ENCODE measurements at regions of chr11 and their contacts with region 1.

Region 1: GRCh38 chr11:59171508-59172322 is at the start of gene DTX4:
- DNase-seq: peak; percentile 90 to 97 (median 96)
- H3K4me3 ChIP-seq: peak within 1 kb of the TSS in 2 of 4 donors; percentile 27 to 67
- H3K27ac ChIP-seq: peak within 1 kb of the TSS in 2 of 5 donors; percentile 79 to 83
- H3K4me1 ChIP-seq: peaks cover 0 to 12% of the 10 kb centered on the region in 2 donors
- H3K27me3 ChIP-seq: no peaks in the 10 kb centered on the region
- CTCF ChIP-seq: peak; percentile 81 to 98 (median 94)
- POLR2A ChIP-seq: peak in 1 of 2 donors; percentile 18
- total RNA-seq, gene DTX4: 2.2 to 7.8 (median 3.3) TPM

Region 2: DNA sequence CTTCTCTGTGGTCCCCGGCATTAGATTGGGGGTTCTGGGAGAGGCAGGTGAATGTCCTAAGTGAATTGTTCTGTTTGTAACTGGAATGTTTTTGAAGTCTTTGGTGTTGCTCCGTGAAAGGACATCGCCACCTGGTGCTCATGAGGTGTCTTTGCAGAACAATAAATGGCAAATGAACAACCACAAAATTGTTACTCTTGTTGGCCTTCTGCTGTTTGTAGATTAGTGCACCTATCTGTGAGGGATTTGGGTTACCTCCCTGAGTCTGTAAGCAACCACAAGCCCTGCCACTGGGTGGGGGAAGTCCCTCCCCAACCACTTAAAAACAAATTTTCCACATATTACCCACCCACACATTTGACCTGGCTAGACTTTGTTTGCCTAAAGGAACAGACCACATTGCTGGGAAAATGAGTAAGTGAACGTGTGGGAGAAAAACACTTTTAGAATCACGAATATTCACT is 36.3 kb after region 1 on chr11:
- intact Hi-C with region 1: loop called (anchors 5 kb)
- DNase-seq: peak in 6 of 7 donors; percentile 37 to 79 (median 58)
- H3K4me3 ChIP-seq: peak overlapping the region in 1 of 4 donors; percentile 3
- H3K27ac ChIP-seq: no peak overlapping the region
- H3K4me1 ChIP-seq: peaks cover 0 to 8% of the 10 kb centered on the region in 2 donors
- H3K27me3 ChIP-seq: no peaks in the 10 kb centered on the region
- CTCF ChIP-seq: peak; percentile 64 to 82 (median 74)
- POLR2A ChIP-seq: no peak

Region 3: DNA sequence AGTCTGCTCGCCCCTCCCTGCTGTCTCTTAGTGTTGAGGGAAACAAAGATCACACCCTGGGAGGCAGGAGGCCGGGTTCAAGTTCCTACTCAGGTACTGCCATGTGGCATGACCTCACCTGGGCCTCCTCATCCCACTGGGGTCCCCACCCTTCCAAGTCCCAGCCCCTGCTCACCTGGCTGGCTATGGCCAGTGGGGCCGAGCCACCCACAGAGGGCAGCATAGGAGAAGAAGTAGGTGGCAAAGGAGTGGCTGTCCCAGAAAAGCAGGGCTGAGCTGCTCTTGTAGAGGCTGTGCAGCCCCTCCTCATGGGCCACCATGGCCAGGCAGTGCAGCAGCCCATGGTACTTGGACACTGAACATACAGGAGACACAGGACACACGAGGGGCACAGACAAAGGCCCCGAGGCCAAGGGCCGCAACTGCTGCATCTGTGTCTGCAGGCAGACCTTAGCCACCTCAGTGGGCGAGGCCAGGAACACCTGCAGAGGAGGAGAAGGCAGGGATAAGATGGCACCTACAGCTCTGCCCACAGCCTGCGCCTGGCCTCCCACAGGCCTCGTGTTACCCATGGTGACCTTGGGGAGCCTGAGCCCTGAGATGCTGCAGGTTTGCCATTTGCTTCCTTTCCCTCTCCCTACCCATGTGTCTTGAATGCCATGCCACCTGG is 91.6 kb after region 1 on chr11:
- intact Hi-C with region 1: no loop called
- DNase-seq: no peak
- H3K4me3 ChIP-seq: no peak overlapping the region
- H3K27ac ChIP-seq: no peak overlapping the region
- H3K4me1 ChIP-seq: no peaks in the 10 kb centered on the region
- H3K27me3 ChIP-seq: no peaks in the 10 kb centered on the region
- CTCF ChIP-seq: no peak
- POLR2A ChIP-seq: no peak

Region 4: GRCh38 chr11:59283825-59284772 is 112.4 kb after region 1 on chr11:
- intact Hi-C with region 1: loop called in 1 of 2 experiments (anchors 5 kb)
- DNase-seq: peak in 6 of 7 donors; percentile 20 to 77 (median 48)
- H3K4me3 ChIP-seq: no peak overlapping the region
- H3K27ac ChIP-seq: no peak overlapping the region
- H3K4me1 ChIP-seq: no peaks in the 10 kb centered on the region
- H3K27me3 ChIP-seq: no peaks in the 10 kb centered on the region
- CTCF ChIP-seq: peak; percentile 58 to 80 (median 74)
- POLR2A ChIP-seq: no peak

Region 5: DNA sequence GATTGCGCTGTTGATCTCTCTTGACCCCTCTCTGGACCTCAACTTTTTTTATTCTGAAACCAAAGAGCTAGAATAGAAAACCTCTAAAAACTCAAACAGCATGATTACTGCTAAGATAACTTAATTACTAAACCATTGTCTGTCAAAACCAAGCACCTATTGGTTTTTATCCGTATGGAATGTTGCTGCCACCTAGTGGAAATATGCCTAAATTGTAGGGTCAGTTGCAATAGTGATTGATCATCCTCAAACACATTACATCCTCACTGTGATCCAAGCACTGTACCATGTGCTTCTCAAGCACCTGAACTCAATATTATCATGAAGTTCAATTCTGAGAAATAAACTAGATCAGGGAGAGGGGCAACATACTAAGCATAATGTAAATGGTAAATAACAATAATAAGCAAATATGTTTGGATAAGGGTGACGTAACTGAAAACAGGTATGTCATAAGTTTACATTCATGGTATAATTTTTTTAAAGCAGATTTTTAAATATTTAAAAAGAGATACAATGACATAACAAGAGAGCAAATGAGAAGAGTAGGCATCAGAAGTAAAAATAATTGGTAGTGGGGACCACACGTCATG is 258.3 kb after region 1 on chr11:
- intact Hi-C with region 1: loop called in 1 of 2 experiments (anchors 10 kb)
- DNase-seq: peak in 5 of 7 donors; percentile 14 to 35 (median 20)
- H3K4me3 ChIP-seq: no peak overlapping the region
- H3K27ac ChIP-seq: no peak overlapping the region
- H3K4me1 ChIP-seq: no peaks in the 10 kb centered on the region
- H3K27me3 ChIP-seq: no peaks in the 10 kb centered on the region
- CTCF ChIP-seq: peak; percentile 51 to 71 (median 68)
- POLR2A ChIP-seq: no peak

Region 6: DNA sequence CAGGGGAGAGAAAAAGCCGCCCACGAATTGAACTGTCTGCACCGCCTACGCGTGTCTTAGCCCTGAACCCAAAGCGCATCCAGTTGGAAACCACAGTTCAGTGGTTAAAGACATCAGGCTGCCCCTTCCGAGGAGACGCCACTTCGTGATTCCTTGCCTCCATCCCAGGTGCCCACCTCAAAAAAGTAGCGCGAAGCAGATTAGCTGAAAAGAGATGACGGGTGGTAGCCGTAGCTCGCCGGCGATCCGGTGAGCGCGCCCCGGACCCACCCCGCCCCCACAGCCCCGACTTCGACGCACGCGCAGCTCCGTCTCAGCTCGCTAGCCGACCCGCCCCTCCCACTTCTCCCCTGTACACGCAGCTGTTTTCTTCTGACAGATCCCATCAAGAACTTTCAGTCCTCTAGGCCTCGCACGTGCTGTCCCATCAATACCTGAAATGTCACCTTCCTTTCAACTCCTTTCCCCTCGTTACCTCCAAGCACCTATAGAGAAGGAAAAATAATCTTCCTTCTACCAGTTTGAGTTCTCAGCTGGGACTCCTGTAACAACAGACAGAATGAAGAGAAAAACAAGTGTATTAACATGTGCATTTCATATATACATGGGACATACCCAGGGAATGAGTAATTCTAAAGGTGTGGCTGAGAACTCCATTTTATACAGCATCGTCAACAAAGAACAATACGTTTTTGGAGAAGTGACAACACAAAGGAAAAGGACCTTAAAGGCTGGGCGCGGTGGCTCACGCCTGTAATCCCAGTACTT is 389.2 kb after region 1 on chr11:
- intact Hi-C with region 1: no loop called
- DNase-seq: peak; percentile 83 to 95 (median 89)
- H3K4me3 ChIP-seq: peak overlapping the region; percentile 37 to 88 (median 60)
- H3K27ac ChIP-seq: peak overlapping the region; percentile 64 to 94 (median 90)
- H3K4me1 ChIP-seq: peaks cover 0 to 19% of the 10 kb centered on the region in 2 donors
- H3K27me3 ChIP-seq: no peaks in the 10 kb centered on the region
- CTCF ChIP-seq: no peak
- POLR2A ChIP-seq: peak in 1 of 2 donors; percentile 59

Region 7: GRCh38 chr11:59680287-59681154 is 508.8 kb after region 1 on chr11:
- intact Hi-C with region 1: loop called in 1 of 2 experiments (anchors 10 kb)
- DNase-seq: peak; percentile 69 to 85 (median 81)
- H3K4me3 ChIP-seq: no peak overlapping the region
- H3K27ac ChIP-seq: no peak overlapping the region
- H3K4me1 ChIP-seq: no peaks in the 10 kb centered on the region
- H3K27me3 ChIP-seq: no peaks in the 10 kb centered on the region
- CTCF ChIP-seq: peak; percentile 53 to 84 (median 78)
- POLR2A ChIP-seq: no peak

Measured in adrenal gland (tissue), 19 donors.